Heart right ventricle (tissue), 16 donors: ENCODE measurements at regions of chr12 and their contacts with region 1.

Region 1: GRCh38 chr12:42735861-42736361 is 146.4 kb upstream of the PRICKLE1 start:
- DNase-seq: peak; percentile 55 to 73
- ATAC-seq: peak; percentile 85 to 97 (median 94)
- H3K4me3 ChIP-seq: peak overlapping the region in 6 of 10 donors; percentile 11 to 36 (median 24)
- H3K27ac ChIP-seq: peak overlapping the region; percentile 2 to 84 (median 76)
- H3K4me1 ChIP-seq: peaks cover 0 to 41% (median 10%) of the 10 kb centered on the region in 9 donors
- H3K27me3 ChIP-seq: no peaks in the 10 kb centered on the region
- CTCF ChIP-seq: no peak

Region 2: DNA sequence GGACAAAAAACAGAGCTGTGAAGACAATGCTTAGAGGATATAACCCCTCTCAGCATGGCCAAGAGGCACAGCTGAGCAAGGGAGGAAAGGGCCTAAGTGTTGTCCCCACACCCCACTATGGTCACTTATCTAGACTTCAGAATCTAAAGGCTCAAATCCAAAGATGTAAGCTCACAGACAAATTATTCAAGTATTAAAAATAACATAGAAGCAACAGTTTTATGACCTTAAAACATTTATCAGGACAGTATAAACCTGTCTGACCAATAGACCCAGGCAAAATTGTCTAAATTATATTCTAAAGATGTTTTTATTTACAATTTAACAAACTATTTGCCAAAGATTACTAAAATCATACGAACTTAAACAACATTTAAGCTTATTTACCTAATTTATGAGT is 118.3 kb before region 1 on chr12:
- intact Hi-C with region 1: no loop called
- DNase-seq: no peak
- ATAC-seq: no peak
- H3K4me3 ChIP-seq: no peak overlapping the region
- H3K27ac ChIP-seq: no peak overlapping the region
- H3K4me1 ChIP-seq: no peaks in the 10 kb centered on the region
- H3K27me3 ChIP-seq: no peaks in the 10 kb centered on the region
- CTCF ChIP-seq: no peak

Region 3: GRCh38 chr12:42631513-42631912 is 104.4 kb before region 1 on chr12:
- intact Hi-C with region 1: no loop called
- DNase-seq: no peak
- ATAC-seq: no peak
- H3K4me3 ChIP-seq: no peak overlapping the region
- H3K27ac ChIP-seq: no peak overlapping the region
- H3K4me1 ChIP-seq: peaks cover 0 to 11% (median 0%) of the 10 kb centered on the region in 9 donors
- H3K27me3 ChIP-seq: no peaks in the 10 kb centered on the region
- CTCF ChIP-seq: no peak

Region 4: DNA sequence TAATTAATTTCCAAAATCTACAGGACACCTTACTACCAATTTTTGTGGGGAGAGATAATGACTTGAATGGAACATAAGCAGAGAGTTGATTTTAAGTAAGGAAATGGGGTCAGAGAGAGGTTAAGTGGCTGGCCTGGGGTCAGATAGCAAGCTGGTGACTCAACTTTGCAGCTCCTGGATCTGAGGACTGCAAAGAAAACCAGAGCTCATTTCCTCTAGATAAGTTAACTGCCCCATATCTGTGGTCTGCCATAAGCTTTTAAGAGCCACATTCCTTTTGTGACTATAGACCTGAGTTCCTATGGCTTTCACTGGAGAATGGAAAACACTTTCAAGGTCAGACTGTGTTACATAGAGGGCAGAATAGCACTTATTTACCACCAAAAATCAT is 54.8 kb after region 1 on chr12:
- intact Hi-C with region 1: loop called in 2 of 10 experiments (anchors 2 to 5 kb)
- DNase-seq: no peak
- ATAC-seq: peak in 4 of 8 donors; percentile 27 to 47 (median 36)
- H3K4me3 ChIP-seq: no peak overlapping the region
- H3K27ac ChIP-seq: peak overlapping the region in 2 of 10 donors; percentile 37 to 41
- H3K4me1 ChIP-seq: peaks cover 0 to 18% (median 8%) of the 10 kb centered on the region in 9 donors
- H3K27me3 ChIP-seq: no peaks in the 10 kb centered on the region
- CTCF ChIP-seq: no peak